Gastrocnemius medialis (tissue), 4 donors: ENCODE measurements at regions of chr10 and their contacts with region 1.

Region 1: GRCh38 chr10:79149662-79150443 is 81.1 kb downstream of the ZMIZ1 start:
- DNase-seq: peak; percentile 76 to 94
- ATAC-seq: peak; percentile 13 to 32
- H3K4me3 ChIP-seq: no peak overlapping the region
- H3K27ac ChIP-seq: peak overlapping the region; percentile 86 to 92 (median 88)
- H3K4me1 ChIP-seq: peaks cover 85 to 99% of the 10 kb centered on the region in 2 donors
- H3K27me3 ChIP-seq: no peaks in the 10 kb centered on the region
- CTCF ChIP-seq: no peak
- POLR2A ChIP-seq: peak; percentile 34 to 51

Region 2: DNA sequence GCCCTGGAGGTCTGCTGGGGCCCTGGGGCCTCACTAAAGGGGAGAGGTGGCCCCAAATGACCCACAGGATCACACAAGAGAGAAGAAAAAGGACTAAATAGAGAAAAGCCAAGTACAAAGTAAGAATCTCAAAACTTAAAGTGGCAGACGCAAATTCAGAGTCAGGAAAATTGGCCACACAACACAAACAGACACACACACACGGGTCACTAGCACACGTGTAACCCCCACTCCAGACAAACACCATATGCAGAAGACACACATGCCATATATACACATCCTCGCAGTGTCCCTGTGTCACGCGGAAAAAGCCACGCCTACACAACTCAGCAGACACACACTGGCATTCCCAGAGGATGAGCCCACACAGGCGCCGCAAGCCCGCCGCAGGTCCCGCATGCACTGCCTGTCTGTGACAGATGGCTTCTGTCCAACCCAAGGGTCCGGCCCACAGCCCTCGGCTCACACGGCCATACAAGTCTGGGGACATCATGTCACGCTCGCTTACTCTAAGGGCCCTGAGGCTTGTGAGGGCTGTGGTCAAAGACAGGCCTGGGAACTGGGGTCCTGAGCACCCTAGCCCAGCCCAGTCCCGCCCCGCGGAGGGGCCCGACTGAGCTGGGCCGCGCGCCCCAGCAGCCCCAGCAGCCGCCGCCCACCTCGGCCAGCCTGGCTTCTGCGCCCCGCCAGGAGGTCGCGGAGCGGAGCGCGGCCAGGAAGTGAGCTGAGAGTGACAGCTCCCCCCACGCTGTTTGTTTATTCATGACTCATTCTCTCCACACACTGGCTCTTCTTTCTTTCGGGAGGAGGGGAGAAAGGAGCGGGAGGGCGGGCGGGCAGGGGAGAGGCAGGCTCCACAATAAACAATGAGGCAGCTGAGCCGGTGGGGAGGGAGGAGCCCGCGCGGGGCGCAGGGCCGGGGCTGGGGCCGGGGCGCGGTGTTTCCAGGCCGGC is 176.6 kb before region 1 on chr10:
- in situ Hi-C with region 1: no loop called
- intact Hi-C with region 1: loop called (anchors 2 kb)
- DNase-seq: peak; percentile 84 to 91
- ATAC-seq: peak; percentile 77 to 80
- H3K4me3 ChIP-seq: peak overlapping the region; percentile 40 to 72 (median 58)
- H3K27ac ChIP-seq: peak overlapping the region; percentile 97 to 100 (median 98)
- H3K4me1 ChIP-seq: peaks cover 28 to 30% of the 10 kb centered on the region in 2 donors
- H3K27me3 ChIP-seq: no peaks in the 10 kb centered on the region
- CTCF ChIP-seq: no peak
- POLR2A ChIP-seq: peak; percentile 76 to 83

Region 3: GRCh38 chr10:79022565-79023230 is 127.2 kb before region 1 on chr10:
- in situ Hi-C with region 1: no loop called
- intact Hi-C with region 1: loop called (anchors 5 kb)
- DNase-seq: peak; percentile 55 to 78
- ATAC-seq: peak; percentile 57 to 70
- H3K4me3 ChIP-seq: peak overlapping the region; percentile 29 to 48 (median 36)
- H3K27ac ChIP-seq: peak overlapping the region; percentile 89 to 91 (median 90)
- H3K4me1 ChIP-seq: peaks cover 24 to 35% of the 10 kb centered on the region in 2 donors
- H3K27me3 ChIP-seq: no peaks in the 10 kb centered on the region
- CTCF ChIP-seq: no peak
- POLR2A ChIP-seq: peak in 1 of 2 donors; percentile 17

Region 4: GRCh38 chr10:79084012-79084971 is 65.6 kb before region 1 on chr10:
- in situ Hi-C with region 1: loop called in 2 of 4 experiments (anchors 5 to 10 kb)
- intact Hi-C with region 1: loop called (anchors 2 kb)
- DNase-seq: peak; percentile 68 to 90
- ATAC-seq: peak; percentile 1 to 6
- H3K4me3 ChIP-seq: no peak overlapping the region
- H3K27ac ChIP-seq: peak overlapping the region; percentile 90 to 95 (median 94)
- H3K4me1 ChIP-seq: peaks cover 92 to 97% of the 10 kb centered on the region in 2 donors
- H3K27me3 ChIP-seq: no peaks in the 10 kb centered on the region
- CTCF ChIP-seq: no peak
- POLR2A ChIP-seq: no peak

Region 5: GRCh38 chr10:79116801-79117723 is 32.8 kb before region 1 on chr10:
- in situ Hi-C with region 1: no loop called
- intact Hi-C with region 1: loop called (anchors 1 kb)
- DNase-seq: peak; percentile 60 to 62
- ATAC-seq: peak in 1 of 2 donors; percentile 10
- H3K4me3 ChIP-seq: no peak overlapping the region
- H3K27ac ChIP-seq: peak overlapping the region; percentile 10 to 38 (median 30)
- H3K4me1 ChIP-seq: peaks cover 59 to 65% of the 10 kb centered on the region in 2 donors
- H3K27me3 ChIP-seq: no peaks in the 10 kb centered on the region
- CTCF ChIP-seq: no peak
- POLR2A ChIP-seq: no peak

Region 6: DNA sequence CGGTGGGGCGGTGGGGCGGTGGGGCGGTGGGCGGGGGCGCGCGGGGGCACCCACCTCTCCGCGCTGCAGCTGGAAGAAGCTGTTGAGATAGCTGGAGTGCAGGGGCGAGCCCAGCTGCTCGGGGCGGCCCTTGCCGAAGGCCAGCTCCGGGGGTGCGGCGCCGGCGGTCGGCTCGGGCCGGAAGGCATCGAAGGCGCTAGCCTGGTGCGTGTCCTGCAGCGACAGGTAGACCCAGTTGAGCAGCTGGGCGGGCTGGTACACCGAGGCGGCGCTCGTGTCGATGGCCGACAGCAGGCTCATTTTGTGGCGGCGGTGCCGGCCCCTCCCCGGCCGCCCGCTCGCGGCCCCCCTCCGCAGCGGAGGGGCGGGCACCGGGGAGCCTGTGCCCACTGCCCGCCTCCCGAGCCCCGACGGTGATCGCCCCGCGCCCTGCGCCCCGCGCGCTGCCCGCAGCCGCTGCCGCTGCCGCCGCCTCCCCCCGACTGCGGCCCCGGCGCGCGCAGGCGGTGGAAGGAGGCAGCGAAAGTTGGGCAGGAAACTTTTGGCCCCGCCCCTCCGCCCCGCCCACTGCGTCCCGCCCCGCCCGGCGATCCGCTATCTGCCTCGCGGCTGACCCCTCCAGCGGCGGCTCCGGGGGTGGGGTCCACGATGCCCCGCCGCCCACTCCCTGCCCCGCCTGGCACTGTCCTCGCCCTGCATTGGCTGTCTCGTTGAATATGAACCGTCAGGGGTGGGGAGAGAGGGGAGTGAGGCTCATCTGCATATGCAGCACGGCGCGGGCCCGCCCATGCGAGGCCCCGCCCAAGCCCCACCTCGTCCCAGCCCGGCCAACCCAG is 295.5 kb after region 1 on chr10 and contains the start of gene ZCCHC24:
- in situ Hi-C with region 1: no loop called
- intact Hi-C with region 1: loop called (anchors 10 kb)
- DNase-seq: peak; percentile 99
- ATAC-seq: peak; percentile 57 to 64
- H3K4me3 ChIP-seq: peak within 1 kb of the TSS; percentile 69 to 88 (median 71)
- H3K27ac ChIP-seq: peak within 1 kb of the TSS; percentile 91 to 98 (median 94)
- H3K4me1 ChIP-seq: peaks cover 69 to 78% of the 10 kb centered on the region in 2 donors
- H3K27me3 ChIP-seq: no peaks in the 10 kb centered on the region
- CTCF ChIP-seq: peak in 1 of 5 experiments; percentile 12
- POLR2A ChIP-seq: peak; percentile 97 to 98
- total RNA-seq, gene ZCCHC24: 59.6 to 122 (median 84.5) TPM